ENCODE measurements at regions of chr9 and their contacts with region 1.

Region 1: GRCh38 chr9:130023144-130023787 is 19.7 kb downstream of the FNBP1 start:
- DNase-seq: peak; percentile 55
- H3K4me3 ChIP-seq: no peak overlapping the region
- H3K27ac ChIP-seq: no peak overlapping the region
- H3K4me1 ChIP-seq: no peaks in the 10 kb centered on the region
- H3K27me3 ChIP-seq: no peaks in the 10 kb centered on the region
- CTCF ChIP-seq: no peak

Region 2: GRCh38 chr9:129954868-129955550 is 68.3 kb before region 1 on chr9:
- CTCF ChIA-PET with region 1: no interaction called
- dilution Hi-C with region 1: loop called (anchors 5 kb)
- in situ Hi-C with region 1: no loop called
- intact Hi-C with region 1: no loop called
- DNase-seq: no peak
- H3K4me3 ChIP-seq: no peak overlapping the region
- H3K27ac ChIP-seq: no peak overlapping the region
- H3K4me1 ChIP-seq: no peaks in the 10 kb centered on the region
- H3K27me3 ChIP-seq: no peaks in the 10 kb centered on the region
- CTCF ChIP-seq: no peak

Region 3: GRCh38 chr9:130042833-130043653 is 19.8 kb after region 1 on chr9 and contains the start of gene FNBP1:
- CTCF ChIA-PET with region 1: no interaction called
- dilution Hi-C with region 1: no loop called
- in situ Hi-C with region 1: no loop called
- intact Hi-C with region 1: no loop called
- DNase-seq: peak; percentile 69
- H3K4me3 ChIP-seq: peak within 1 kb of the TSS; percentile 79 to 88 (median 86)
- H3K27ac ChIP-seq: peak within 1 kb of the TSS; percentile 34
- H3K4me1 ChIP-seq: peaks cover 4% of the 10 kb centered on the region
- H3K27me3 ChIP-seq: no peaks in the 10 kb centered on the region
- CTCF ChIP-seq: peak in 1 of 2 donors; percentile 8
- total RNA-seq, gene FNBP1: 11.5 to 21.5 TPM

Measured in mammary epithelial cell (primary cell).